ENCODE measurements at regions of chr1 and their contacts with region 1.

Region 1: GRCh38 chr1:114346480-114347029 is 164.4 kb downstream of the TRIM33 start:
- DNase-seq: peak; percentile 87 to 93
- H3K4me3 ChIP-seq: peak overlapping the region; percentile 38
- H3K4me3 Mint-ChIP-seq: peak overlapping the region; percentile 85
- H3K27ac Mint-ChIP-seq: peak overlapping the region; percentile 74
- H3K4me1 ChIP-seq: no peaks in the 10 kb centered on the region
- H3K4me1 Mint-ChIP-seq: no peaks in the 10 kb centered on the region
- H3K27me3 ChIP-seq: no peaks in the 10 kb centered on the region
- H3K27me3 Mint-ChIP-seq: no peaks in the 10 kb centered on the region
- CTCF ChIP-seq: peak; percentile 97 to 99

Region 2: DNA sequence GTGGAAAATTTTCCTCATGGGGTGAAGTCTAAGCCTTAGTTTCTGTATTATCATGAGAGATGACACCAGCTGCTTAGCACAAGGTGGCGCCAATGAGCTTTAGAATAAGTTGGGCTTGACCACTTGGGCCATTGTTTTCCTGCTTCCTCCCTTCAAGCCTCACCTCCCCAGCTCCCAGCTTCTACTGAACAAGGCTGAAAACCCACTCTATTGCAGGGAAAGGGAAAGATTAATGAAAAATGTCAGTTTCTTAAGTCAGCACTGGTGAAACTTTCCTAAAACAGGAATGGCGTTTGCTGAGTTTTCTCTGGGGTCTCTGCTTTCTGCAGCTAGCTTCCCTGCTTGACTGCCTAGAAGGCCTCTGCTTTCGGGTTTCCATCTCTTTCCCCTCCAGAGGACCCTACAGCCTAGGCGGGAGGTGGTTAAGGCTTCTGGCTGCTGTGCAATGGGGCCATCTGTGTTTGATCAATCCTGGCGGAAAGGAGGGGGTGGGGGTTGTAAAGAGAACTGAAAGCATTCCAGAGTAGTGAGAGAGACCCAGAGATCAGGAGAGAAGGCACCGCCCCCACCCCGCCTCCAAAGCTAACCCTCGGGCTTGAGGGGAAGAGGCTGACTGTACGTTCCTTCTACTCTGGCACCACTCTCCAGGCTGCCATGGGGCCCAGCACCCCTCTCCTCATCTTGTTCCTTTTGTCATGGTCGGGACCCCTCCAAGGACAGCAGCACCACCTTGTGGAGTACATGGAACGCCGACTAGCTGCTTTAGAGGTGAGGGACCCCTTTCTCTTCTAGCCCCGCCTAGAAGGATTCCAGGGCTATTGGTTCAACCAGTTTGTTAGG is 367.5 kb before region 1 on chr1 and contains the start of gene OLFML3:
- CTCF ChIA-PET with region 1: no interaction called
- POLR2A ChIA-PET with region 1: no interaction called
- intact Hi-C with region 1: loop called (anchors 5 kb)
- DNase-seq: peak; percentile 77 to 83
- H3K4me3 ChIP-seq: peak within 1 kb of the TSS; percentile 18
- H3K4me3 Mint-ChIP-seq: peak within 1 kb of the TSS; percentile 66
- H3K27ac Mint-ChIP-seq: peak within 1 kb of the TSS; percentile 93
- H3K4me1 ChIP-seq: peaks cover 15% of the 10 kb centered on the region
- H3K4me1 Mint-ChIP-seq: no peaks in the 10 kb centered on the region
- H3K27me3 ChIP-seq: no peaks in the 10 kb centered on the region
- H3K27me3 Mint-ChIP-seq: no peaks in the 10 kb centered on the region
- CTCF ChIP-seq: peak; percentile 44 to 63
- total RNA-seq, gene OLFML3: 29.1 and 36.5 TPM in 2 replicates

Region 3: GRCh38 chr1:114378377-114378776 is 31.8 kb after region 1 on chr1:
- CTCF ChIA-PET with region 1: interaction called, 5 read pairs
- POLR2A ChIA-PET with region 1: no interaction called
- intact Hi-C with region 1: loop called (anchors 1 kb)
- DNase-seq: no peak
- H3K4me3 ChIP-seq: no peak overlapping the region
- H3K4me3 Mint-ChIP-seq: no peak overlapping the region
- H3K27ac Mint-ChIP-seq: no peak overlapping the region
- H3K4me1 ChIP-seq: no peaks in the 10 kb centered on the region
- H3K4me1 Mint-ChIP-seq: no peaks in the 10 kb centered on the region
- H3K27me3 ChIP-seq: no peaks in the 10 kb centered on the region
- H3K27me3 Mint-ChIP-seq: no peaks in the 10 kb centered on the region
- CTCF ChIP-seq: no peak

Region 4: GRCh38 chr1:114428083-114428749 is 81.7 kb after region 1 on chr1:
- CTCF ChIA-PET with region 1: interaction called, 7 read pairs
- POLR2A ChIA-PET with region 1: no interaction called
- intact Hi-C with region 1: loop called (anchors 2 kb)
- DNase-seq: peak in 1 of 2 experiments; percentile 3
- H3K4me3 ChIP-seq: no peak overlapping the region
- H3K4me3 Mint-ChIP-seq: no peak overlapping the region
- H3K27ac Mint-ChIP-seq: no peak overlapping the region
- H3K4me1 ChIP-seq: no peaks in the 10 kb centered on the region
- H3K4me1 Mint-ChIP-seq: no peaks in the 10 kb centered on the region
- H3K27me3 ChIP-seq: no peaks in the 10 kb centered on the region
- H3K27me3 Mint-ChIP-seq: no peaks in the 10 kb centered on the region
- CTCF ChIP-seq: peak in 1 of 2 experiments; percentile 21

Region 5: DNA sequence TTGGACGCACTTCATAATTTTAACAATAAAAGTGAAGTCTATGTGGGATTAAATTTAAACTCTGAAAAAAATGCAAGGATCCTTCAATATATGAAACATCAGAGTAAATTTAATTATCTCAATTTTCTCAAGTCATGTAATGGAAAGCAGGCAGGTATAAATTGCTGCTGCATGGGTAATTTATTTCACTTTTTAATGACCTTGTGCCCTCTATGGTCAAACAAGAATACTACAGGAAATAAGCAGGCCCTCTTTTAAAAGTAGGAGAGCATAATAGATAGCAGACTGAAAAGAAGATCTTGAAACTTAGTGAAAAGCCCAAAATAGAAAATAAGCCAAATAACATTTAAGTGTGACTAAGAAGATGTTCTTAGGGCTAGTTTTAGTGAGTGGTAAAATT is 212.0 kb after region 1 on chr1:
- CTCF ChIA-PET with region 1: no interaction called
- POLR2A ChIA-PET with region 1: no interaction called
- intact Hi-C with region 1: loop called (anchors 5 kb)
- DNase-seq: no peak
- H3K4me3 ChIP-seq: no peak overlapping the region
- H3K4me3 Mint-ChIP-seq: no peak overlapping the region
- H3K27ac Mint-ChIP-seq: no peak overlapping the region
- H3K4me1 ChIP-seq: no peaks in the 10 kb centered on the region
- H3K4me1 Mint-ChIP-seq: peaks cover 6% of the 10 kb centered on the region
- H3K27me3 ChIP-seq: no peaks in the 10 kb centered on the region
- H3K27me3 Mint-ChIP-seq: no peaks in the 10 kb centered on the region
- CTCF ChIP-seq: peak in 1 of 2 experiments; percentile 21